ENCODE measurements at regions of chr2 and their contacts with region 1.

Region 1: DNA sequence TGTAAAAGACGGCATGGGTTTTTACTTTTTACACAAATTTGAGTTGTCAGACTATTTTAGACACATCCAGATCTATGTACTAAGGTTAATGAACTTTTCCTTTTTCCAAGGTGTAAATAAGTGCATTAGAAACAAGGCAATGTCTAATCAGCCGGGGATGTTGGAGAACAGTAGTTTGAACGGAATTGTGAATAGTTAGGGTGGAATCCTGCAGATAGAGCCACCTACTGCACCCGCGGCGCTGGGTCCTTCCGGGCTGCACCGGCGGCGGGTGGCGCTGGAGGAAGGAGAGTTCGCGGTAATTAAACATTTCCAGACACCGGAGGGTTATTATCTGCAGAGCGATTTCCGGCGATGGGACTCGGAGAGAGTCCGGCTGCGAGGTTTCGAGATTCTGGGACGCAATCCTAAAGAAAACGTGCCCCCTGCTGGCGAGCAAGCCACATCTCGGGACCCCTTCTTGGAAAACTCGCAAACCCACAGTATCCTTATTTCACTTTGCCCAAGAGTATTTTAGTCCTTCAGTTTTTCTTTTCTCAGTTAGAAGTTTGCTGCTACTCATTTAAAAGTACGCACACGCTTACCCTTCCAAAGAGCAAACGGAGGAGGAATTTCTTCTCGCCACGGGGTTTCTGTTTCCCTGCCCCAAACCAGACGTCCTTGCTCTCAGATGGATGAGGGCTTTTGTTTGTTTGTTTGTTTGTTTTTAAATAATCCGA is 4.5 kb upstream of the OSR1 start:
- DNase-seq: peak; percentile 80 to 86
- ATAC-seq: peak; percentile 52 to 75 (median 68)
- H3K4me3 ChIP-seq: peak overlapping the region; percentile 78
- H3K27ac ChIP-seq: no peak overlapping the region
- H3K4me1 ChIP-seq: no peaks in the 10 kb centered on the region
- H3K27me3 ChIP-seq: peaks cover 0 to 24% (median 0%) of the 10 kb centered on the region in 3 donors
- CTCF ChIP-seq: peak; percentile 79

Region 2: GRCh38 chr2:18435421-18436037 is 927.4 kb before region 1 on chr2:
- intact Hi-C with region 1: loop called in 1 of 2 experiments (anchors 5 kb)
- DNase-seq: no peak
- ATAC-seq: peak in 2 of 4 donors; percentile 61 to 68
- H3K4me3 ChIP-seq: no peak overlapping the region
- H3K27ac ChIP-seq: no peak overlapping the region
- H3K4me1 ChIP-seq: peaks cover 31% of the 10 kb centered on the region
- H3K27me3 ChIP-seq: no peaks in the 10 kb centered on the region
- CTCF ChIP-seq: peak; percentile 53

Region 3: GRCh38 chr2:18749912-18750526 is 612.9 kb before region 1 on chr2:
- intact Hi-C with region 1: loop called (anchors 1 to 5 kb)
- DNase-seq: peak in 1 of 2 donors; percentile 21
- ATAC-seq: peak in 3 of 4 donors; percentile 58 to 85 (median 59)
- H3K4me3 ChIP-seq: no peak overlapping the region
- H3K27ac ChIP-seq: no peak overlapping the region
- H3K4me1 ChIP-seq: peaks cover 23% of the 10 kb centered on the region
- H3K27me3 ChIP-seq: no peaks in the 10 kb centered on the region
- CTCF ChIP-seq: peak; percentile 77

Region 4: GRCh38 chr2:18987592-18988073 is 375.3 kb before region 1 on chr2:
- intact Hi-C with region 1: loop called (anchors 2 to 10 kb)
- DNase-seq: peak; percentile 78 to 81
- ATAC-seq: peak in 3 of 4 donors; percentile 65 to 88 (median 66)
- H3K4me3 ChIP-seq: no peak overlapping the region
- H3K27ac ChIP-seq: no peak overlapping the region
- H3K4me1 ChIP-seq: peaks cover 10% of the 10 kb centered on the region
- H3K27me3 ChIP-seq: no peaks in the 10 kb centered on the region
- CTCF ChIP-seq: peak; percentile 41

Region 5: DNA sequence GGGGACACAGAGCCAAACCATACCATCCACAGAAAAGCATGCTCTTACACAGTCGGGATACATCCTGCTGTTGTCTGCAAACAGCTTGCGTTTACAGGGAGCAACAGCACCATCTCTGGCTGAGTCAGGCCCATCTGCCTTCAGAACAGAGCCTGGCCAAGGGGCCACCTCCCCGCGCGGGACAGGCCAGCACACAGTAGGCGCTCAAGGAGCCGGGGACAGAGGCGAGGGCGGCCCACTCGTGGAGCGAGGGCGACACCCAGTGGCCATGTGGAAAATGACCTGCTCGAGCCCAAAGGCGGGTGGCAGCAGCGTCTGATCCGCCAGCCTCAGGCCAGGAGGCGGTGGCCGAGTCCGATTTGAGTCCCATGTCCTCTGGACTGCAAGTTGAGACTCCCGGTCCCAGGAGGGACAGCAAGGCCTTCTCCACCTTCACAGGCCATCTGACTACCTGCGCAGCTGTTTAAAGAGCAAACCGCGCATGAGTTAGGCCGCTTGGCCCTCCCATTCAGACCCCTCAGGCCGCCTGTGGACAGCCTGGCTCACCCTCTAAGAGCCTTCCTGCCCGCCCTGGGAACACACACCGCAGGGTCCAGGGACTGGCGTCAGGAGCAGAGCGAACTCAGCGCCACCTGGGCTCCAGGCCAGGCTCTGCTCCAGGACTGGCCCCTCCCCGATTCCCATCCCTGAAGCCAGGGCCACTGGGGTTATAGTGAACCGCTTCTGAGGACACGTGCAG is 500.6 kb after region 1 on chr2:
- intact Hi-C with region 1: loop called in 1 of 2 experiments (anchors 5 kb)
- DNase-seq: peak; percentile 72 to 85
- ATAC-seq: peak; percentile 85 to 96 (median 87)
- H3K4me3 ChIP-seq: peak overlapping the region; percentile 28
- H3K27ac ChIP-seq: no peak overlapping the region
- H3K4me1 ChIP-seq: peaks cover 6% of the 10 kb centered on the region
- H3K27me3 ChIP-seq: no peaks in the 10 kb centered on the region
- CTCF ChIP-seq: peak; percentile 97

Measured in psoas muscle (tissue), 8 donors.